CD14-positive monocyte (primary cell): ENCODE measurements at regions of chr6 and their contacts with region 1.

Region 1: GRCh38 chr6:53062169-53062539 is 3.0 kb upstream of the FBXO9 start:
- DNase-seq: no peak
- H3K4me3 ChIP-seq: peak overlapping the region; percentile 50 to 94 (median 58)
- H3K4me3 Mint-ChIP-seq: peak overlapping the region; percentile 95
- H3K27ac ChIP-seq: peak overlapping the region in 1 of 2 donors; percentile 77
- H3K27ac Mint-ChIP-seq: peak overlapping the region in 2 of 7 donors; percentile 26 to 46
- H3K4me1 ChIP-seq: peaks cover 33 to 49% of the 10 kb centered on the region in 2 donors
- H3K4me1 Mint-ChIP-seq: peaks cover 48% of the 10 kb centered on the region
- H3K27me3 ChIP-seq: no peaks in the 10 kb centered on the region
- H3K27me3 Mint-ChIP-seq: peaks cover 4 to 6% (median 5%) of the 10 kb centered on the region in 3 donors
- CTCF ChIP-seq: no peak

Region 2: DNA sequence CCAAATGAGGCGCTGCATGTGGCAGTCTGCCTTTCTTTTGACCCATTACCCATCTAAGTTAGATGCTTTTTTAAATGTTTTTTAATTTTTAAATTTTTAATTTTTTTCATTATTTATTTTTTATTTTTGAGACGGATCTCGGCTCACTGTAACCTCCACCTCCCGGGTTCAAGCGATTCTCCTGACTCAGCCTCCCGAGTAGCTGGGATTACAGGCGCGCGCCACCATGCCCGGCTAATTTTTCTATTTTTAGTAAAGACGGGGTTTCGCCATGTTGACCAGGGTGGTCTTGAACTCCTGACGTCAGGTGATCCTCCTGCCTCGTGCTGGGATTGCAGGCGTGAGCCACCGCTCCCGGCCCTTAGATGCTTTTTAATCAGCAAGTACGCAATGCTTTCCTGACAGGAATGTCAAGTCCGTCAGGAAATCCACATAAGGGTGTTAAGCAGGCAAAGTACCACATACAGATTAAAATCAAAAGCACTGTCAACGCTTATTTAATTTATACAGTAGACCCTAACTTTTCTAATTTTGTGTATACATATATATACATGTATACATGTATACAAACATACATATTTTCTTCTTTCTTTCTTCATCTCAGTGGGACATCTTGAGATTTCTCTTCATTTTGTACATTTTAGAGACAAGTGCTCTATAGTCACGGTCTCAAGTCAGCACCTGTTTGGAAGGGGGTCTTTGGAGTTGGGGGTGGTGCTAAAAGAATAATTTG is 66.1 kb before region 1 on chr6:
- intact Hi-C with region 1: loop called in 1 of 2 experiments (anchors 2 kb)
- DNase-seq: peak in 2 of 3 donors; percentile 25 to 48
- H3K4me3 ChIP-seq: peak overlapping the region; percentile 3 to 83 (median 44)
- H3K4me3 Mint-ChIP-seq: peak overlapping the region; percentile 93 to 100
- H3K27ac ChIP-seq: peak overlapping the region; percentile 90 to 97
- H3K27ac Mint-ChIP-seq: peak overlapping the region; percentile 94 to 98 (median 97)
- H3K4me1 ChIP-seq: peaks cover 22 to 25% of the 10 kb centered on the region in 2 donors
- H3K4me1 Mint-ChIP-seq: peaks cover 39% of the 10 kb centered on the region
- H3K27me3 ChIP-seq: peaks cover 0 to 14% of the 10 kb centered on the region in 2 donors
- H3K27me3 Mint-ChIP-seq: peaks cover 21 to 23% (median 21%) of the 10 kb centered on the region in 3 donors
- CTCF ChIP-seq: no peak

Region 3: GRCh38 chr6:53119772-53120409 is 57.7 kb after region 1 on chr6:
- intact Hi-C with region 1: no loop called
- DNase-seq: no peak
- H3K4me3 ChIP-seq: no peak overlapping the region
- H3K4me3 Mint-ChIP-seq: no peak overlapping the region
- H3K27ac ChIP-seq: no peak overlapping the region
- H3K27ac Mint-ChIP-seq: peak overlapping the region in 1 of 7 donors; percentile 52
- H3K4me1 ChIP-seq: no peaks in the 10 kb centered on the region
- H3K4me1 Mint-ChIP-seq: no peaks in the 10 kb centered on the region
- H3K27me3 ChIP-seq: no peaks in the 10 kb centered on the region
- H3K27me3 Mint-ChIP-seq: peaks cover 0 to 4% (median 4%) of the 10 kb centered on the region in 3 donors
- CTCF ChIP-seq: no peak